Activated CD4-positive, alpha-beta memory T cell treated with anti-CD3 and anti-CD28 coated beads for 36 hours (primary cell): ENCODE measurements at regions of chr1 and their contacts with region 1.

Region 1: GRCh38 chr1:151839457-151840405 is at the start of gene C2CD4D:
- DNase-seq: peak; percentile 86
- H3K4me3 Mint-ChIP-seq: peak within 1 kb of the TSS; percentile 89
- H3K27ac Mint-ChIP-seq: peak within 1 kb of the TSS; percentile 91
- H3K4me1 Mint-ChIP-seq: peaks cover 43% of the 10 kb centered on the region
- H3K27me3 Mint-ChIP-seq: no peaks in the 10 kb centered on the region
- total RNA-seq, gene C2CD4D: 3.3 to 3.9 TPM

Region 2: DNA sequence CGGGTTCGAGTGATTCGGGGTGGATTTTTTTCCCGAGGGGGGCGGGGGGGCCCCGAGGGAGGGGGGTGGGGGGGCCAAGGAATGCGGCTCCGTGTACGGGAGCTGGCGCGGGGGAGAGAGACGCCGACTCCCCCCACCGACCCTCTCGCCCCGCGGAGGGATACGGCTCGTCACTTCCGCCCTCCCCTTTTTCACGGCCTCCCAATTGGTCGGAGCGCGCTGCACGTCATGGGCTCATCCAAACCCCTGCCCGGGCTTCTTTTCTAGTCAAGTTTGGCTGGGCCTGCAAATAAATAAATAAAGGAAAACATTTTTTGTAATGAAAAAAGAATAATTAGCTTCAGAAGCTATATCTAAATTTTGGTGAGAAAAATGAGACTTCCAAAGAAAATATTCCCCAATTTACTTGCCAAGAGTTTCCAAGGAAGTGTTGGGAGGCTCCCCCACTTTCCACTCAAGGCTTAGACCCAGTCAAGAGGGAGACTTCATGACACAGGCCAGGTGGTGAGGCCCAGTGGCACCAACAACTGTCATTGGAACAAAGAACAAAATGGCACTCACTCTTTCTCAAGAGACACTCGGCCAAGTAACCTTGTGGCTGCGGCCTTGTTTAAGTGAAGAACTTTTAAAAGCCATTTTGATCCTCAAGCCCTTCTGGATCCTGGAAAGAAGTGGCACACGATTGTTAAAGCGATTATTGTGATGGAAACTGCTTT is 380.2 kb before region 1 on chr1 and contains the start of gene POGZ:
- CTCF ChIA-PET with region 1: no interaction called
- POLR2A ChIA-PET with region 1: no interaction called
- intact Hi-C with region 1: loop called (anchors 5 kb)
- DNase-seq: peak; percentile 96
- H3K4me3 Mint-ChIP-seq: peak within 1 kb of the TSS; percentile 85
- H3K27ac Mint-ChIP-seq: peak within 1 kb of the TSS; percentile 91
- H3K4me1 Mint-ChIP-seq: peaks cover 20% of the 10 kb centered on the region
- H3K27me3 Mint-ChIP-seq: peaks cover 16% of the 10 kb centered on the region
- total RNA-seq, gene POGZ: 73.7 to 76.3 TPM

Region 3: GRCh38 chr1:151594143-151594625 is 245.5 kb before region 1 on chr1:
- CTCF ChIA-PET with region 1: interaction called, 27 read pairs
- POLR2A ChIA-PET with region 1: no interaction called
- intact Hi-C with region 1: loop called (anchors 2 kb)
- DNase-seq: peak; percentile 91
- H3K4me3 Mint-ChIP-seq: peak overlapping the region; percentile 46
- H3K27ac Mint-ChIP-seq: no peak overlapping the region
- H3K4me1 Mint-ChIP-seq: peaks cover 9% of the 10 kb centered on the region
- H3K27me3 Mint-ChIP-seq: peaks cover 3% of the 10 kb centered on the region

Region 4: GRCh38 chr1:151739590-151740375 is 99.9 kb before region 1 on chr1:
- CTCF ChIA-PET with region 1: interaction called, 29 read pairs
- POLR2A ChIA-PET with region 1: no interaction called
- intact Hi-C with region 1: loop called (anchors 5 kb)
- DNase-seq: no peak
- H3K4me3 Mint-ChIP-seq: no peak overlapping the region
- H3K27ac Mint-ChIP-seq: no peak overlapping the region
- H3K4me1 Mint-ChIP-seq: peaks cover 5% of the 10 kb centered on the region
- H3K27me3 Mint-ChIP-seq: no peaks in the 10 kb centered on the region

Region 5: GRCh38 chr1:151790071-151790940 is 49.4 kb before region 1 on chr1 and contains the start of gene TDRKH:
- CTCF ChIA-PET with region 1: interaction called, 24 read pairs
- POLR2A ChIA-PET with region 1: interaction called, 7 read pairs
- intact Hi-C with region 1: loop called (anchors 1 kb)
- DNase-seq: peak; percentile 99
- H3K4me3 Mint-ChIP-seq: peak within 1 kb of the TSS; percentile 96
- H3K27ac Mint-ChIP-seq: peak within 1 kb of the TSS; percentile 84
- H3K4me1 Mint-ChIP-seq: peaks cover 22% of the 10 kb centered on the region
- H3K27me3 Mint-ChIP-seq: peaks cover 2% of the 10 kb centered on the region
- total RNA-seq, gene TDRKH: 30.6 to 32.4 TPM

Region 6: GRCh38 chr1:151828965-151829698 is 10.6 kb before region 1 on chr1:
- CTCF ChIA-PET with region 1: interaction called, 37 read pairs
- POLR2A ChIA-PET with region 1: interaction called, 7 read pairs
- intact Hi-C with region 1: no loop called
- DNase-seq: no peak
- H3K4me3 Mint-ChIP-seq: peak overlapping the region; percentile 22
- H3K27ac Mint-ChIP-seq: peak overlapping the region; percentile 86
- H3K4me1 Mint-ChIP-seq: peaks cover 69% of the 10 kb centered on the region
- H3K27me3 Mint-ChIP-seq: no peaks in the 10 kb centered on the region